ENCODE measurements at regions of chr20 and their contacts with region 1.

Region 1: GRCh38 chr20:3993109-3993508 is 22.2 kb downstream of the RNF24 start:
- DNase-seq: no peak
- H3K4me3 ChIP-seq: no peak overlapping the region
- H3K4me3 Mint-ChIP-seq: peak overlapping the region in 1 of 2 donors; percentile 41
- H3K27ac ChIP-seq: peak overlapping the region; percentile 45 to 76
- H3K27ac Mint-ChIP-seq: peak overlapping the region; percentile 28 to 81 (median 73)
- H3K4me1 ChIP-seq: peaks cover 34 to 61% of the 10 kb centered on the region in 2 donors
- H3K4me1 Mint-ChIP-seq: peaks cover 59% of the 10 kb centered on the region
- H3K27me3 ChIP-seq: no peaks in the 10 kb centered on the region
- H3K27me3 Mint-ChIP-seq: no peaks in the 10 kb centered on the region
- CTCF ChIP-seq: no peak

Region 2: DNA sequence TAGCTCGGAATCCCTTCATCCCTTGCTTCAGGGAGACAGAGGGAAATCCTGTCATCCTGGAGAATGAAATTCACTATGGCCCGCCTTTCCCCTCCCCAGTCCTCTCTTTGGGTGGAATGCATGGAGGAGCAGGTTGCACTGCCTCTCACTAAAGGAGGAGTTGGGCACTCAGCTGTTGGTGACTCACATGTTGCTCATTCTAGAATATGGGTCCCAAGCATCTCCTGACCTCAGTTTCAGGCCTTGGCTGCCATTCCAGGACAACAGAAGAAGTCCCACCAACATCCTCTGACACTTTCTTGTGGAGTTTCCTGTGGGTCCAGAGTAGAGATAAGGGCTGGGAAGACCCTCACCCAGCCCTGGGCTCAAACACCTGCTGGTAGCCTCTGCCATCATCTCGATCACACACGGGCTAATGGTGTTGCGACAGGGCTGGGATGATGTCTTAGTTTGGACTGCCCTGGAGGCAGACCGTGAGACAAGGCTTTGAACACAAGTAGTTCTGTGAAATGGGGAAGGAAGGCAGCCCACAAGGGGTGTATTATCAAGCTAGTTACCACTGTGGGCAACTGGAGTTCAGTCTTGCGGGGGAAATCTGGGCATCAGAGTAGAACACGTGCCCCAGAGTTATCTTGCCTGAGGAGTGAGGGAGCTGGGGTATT is 74.6 kb after region 1 on chr20:
- intact Hi-C with region 1: loop called in 1 of 2 experiments (anchors 5 kb)
- DNase-seq: peak; percentile 66 to 83 (median 73)
- H3K4me3 ChIP-seq: no peak overlapping the region
- H3K4me3 Mint-ChIP-seq: peak overlapping the region; percentile 37
- H3K27ac ChIP-seq: peak overlapping the region in 1 of 2 donors; percentile 78
- H3K27ac Mint-ChIP-seq: peak overlapping the region; percentile 58 to 89 (median 81)
- H3K4me1 ChIP-seq: peaks cover 66 to 88% of the 10 kb centered on the region in 2 donors
- H3K4me1 Mint-ChIP-seq: peaks cover 90% of the 10 kb centered on the region
- H3K27me3 ChIP-seq: no peaks in the 10 kb centered on the region
- H3K27me3 Mint-ChIP-seq: no peaks in the 10 kb centered on the region
- CTCF ChIP-seq: no peak

Measured in CD14-positive monocyte (primary cell).